ENCODE measurements at regions of chr21 and their contacts with region 1.

Region 1: GRCh38 chr21:32834916-32835235 is 63.3 kb upstream of the PAXBP1 start:
- DNase-seq: no peak
- CTCF ChIP-seq: no peak

Region 2: DNA sequence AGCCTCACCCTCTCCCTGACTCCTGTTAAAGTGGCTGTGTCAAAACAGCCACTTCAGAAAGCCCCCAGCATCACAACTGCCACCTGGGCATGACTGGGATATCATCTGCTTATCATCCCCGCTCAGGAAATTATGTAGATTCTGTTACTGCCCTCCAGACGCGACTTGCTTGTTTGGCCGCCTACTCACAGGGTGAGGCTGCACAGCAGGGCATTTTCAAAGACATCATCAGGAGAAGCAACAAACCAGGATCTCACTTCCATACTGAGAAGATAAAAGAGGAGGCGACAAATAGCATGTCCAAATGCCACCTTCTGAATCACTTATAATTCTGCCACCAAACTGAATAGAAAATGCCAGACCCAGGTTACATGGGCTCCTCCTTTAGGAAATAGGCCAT is 650.8 kb before region 1 on chr21:
- in situ Hi-C with region 1: no loop called
- DNase-seq: no peak
- CTCF ChIP-seq: no peak

Region 3: DNA sequence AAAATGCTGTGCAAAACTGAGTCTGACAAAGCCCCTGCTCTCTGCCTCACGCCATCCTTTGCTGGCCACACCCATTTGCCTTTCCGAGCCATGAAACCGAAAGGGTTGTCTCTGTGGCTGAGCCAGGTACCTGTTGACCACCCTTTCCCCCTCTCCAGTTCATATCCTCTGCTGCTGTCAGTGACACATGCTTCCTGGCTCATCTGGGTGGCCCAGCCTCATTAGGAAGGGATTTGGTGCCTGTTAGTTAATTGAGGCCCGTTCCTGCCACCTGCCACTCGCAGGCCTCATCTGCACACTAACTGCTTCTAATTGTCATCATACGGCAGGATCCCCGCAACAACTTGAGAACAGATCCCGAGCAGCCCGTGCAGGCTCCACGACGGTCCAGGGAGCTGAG is 314.3 kb after region 1 on chr21:
- in situ Hi-C with region 1: loop called (anchors 10 kb)
- DNase-seq: no peak
- CTCF ChIP-seq: no peak

Region 4: DNA sequence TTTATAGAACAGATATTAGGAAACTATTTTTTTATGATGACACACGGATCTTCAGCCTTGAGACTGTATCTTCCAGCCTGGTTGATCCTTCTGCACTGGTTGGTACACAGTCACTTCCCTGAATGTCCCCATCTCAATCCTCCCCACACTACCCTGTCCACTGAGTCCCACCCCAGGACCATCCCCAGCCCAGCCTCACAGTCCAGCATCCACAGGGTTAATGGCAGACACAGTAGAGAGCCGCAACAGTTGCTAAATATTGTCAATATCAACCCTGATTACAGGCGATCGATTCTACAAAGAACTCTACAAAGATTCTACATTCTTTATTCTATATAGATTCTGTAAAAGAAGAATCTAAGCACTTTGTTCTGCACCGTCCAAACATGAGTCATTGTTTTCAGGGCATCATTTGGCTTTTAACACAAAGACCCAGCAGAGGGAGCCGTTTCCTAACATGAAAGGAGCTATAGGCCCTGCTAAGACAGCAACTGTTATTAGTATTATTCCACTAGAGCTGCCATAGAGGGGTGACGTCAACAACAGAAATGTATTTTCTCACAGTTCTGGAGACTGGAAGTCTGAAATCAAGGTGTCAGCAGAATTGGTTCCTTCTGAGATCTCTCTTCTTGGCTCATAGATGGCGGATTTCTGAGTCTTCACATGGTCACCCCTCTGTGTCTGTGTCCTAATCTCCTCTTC is 364.8 kb after region 1 on chr21:
- in situ Hi-C with region 1: loop called (anchors 5 kb)
- DNase-seq: peak; percentile 76
- CTCF ChIP-seq: peak; percentile 76

Region 5: GRCh38 chr21:33441489-33442477 is 606.9 kb after region 1 on chr21:
- in situ Hi-C with region 1: loop called (anchors 10 kb)
- DNase-seq: peak; percentile 62
- CTCF ChIP-seq: no peak